GM12878 (cell line): ENCODE measurements at regions of chr2 and their contacts with region 1.

Region 1: DNA sequence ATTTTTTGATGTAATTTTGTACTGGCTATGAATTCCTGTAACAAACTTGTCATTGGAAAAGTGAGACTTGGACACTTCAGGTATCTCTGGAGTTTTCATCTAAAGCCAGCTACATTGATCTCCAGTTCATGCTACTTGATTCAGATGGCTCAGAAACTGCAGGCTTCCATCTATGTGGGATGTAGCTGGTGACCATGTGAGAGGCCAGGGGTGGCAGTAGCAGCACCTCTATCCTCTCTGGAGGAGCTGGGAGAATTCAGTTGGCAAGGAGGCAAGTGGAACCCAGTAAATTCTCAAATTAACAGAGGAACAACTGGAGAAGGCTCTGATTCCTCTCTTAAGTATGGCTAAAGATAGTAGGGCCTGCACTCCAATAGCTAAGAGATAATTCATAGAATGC is 10.0 kb upstream of the SPTBN1 start:
- DNase-seq: no peak
- ATAC-seq: no peak
- H3K4me3 ChIP-seq: no peak overlapping the region
- H3K27ac ChIP-seq: no peak overlapping the region
- H3K4me1 ChIP-seq: no peaks in the 10 kb centered on the region
- H3K27me3 ChIP-seq: no peaks in the 10 kb centered on the region
- CTCF ChIP-seq: no peak
- EP300 ChIP-seq: no peak
- POLR2A ChIP-seq: no peak
- RAD21 ChIP-seq: no peak

Region 2: DNA sequence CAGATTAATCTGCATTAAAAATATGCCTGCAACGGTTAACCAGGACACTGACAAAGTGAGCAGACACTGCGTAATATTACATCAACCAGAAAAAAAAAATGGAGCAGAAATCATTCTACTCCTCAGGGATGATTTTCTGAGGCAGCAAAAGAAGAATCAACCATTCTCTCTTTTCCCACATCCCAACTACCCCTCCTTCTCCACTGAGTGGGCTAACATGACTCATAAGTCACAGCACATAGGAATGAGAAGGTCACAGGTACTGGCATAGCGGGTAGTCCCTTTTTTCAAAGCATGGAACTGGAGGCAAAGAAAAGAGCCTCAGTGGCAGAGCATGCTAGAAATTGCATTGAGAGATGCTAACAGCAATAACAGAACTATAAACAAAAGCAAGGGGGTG is 135.8 kb before region 1 on chr2:
- CTCF ChIA-PET with region 1: no interaction called
- POLR2A ChIA-PET with region 1: no interaction called
- RAD21 ChIA-PET with region 1: no interaction called
- SMC1A ChIA-PET with region 1: no interaction called
- in situ Hi-C with region 1: no loop called
- intact Hi-C with region 1: no loop called
- DNase-seq: no peak
- ATAC-seq: no peak
- H3K4me3 ChIP-seq: no peak overlapping the region
- H3K27ac ChIP-seq: no peak overlapping the region
- H3K4me1 ChIP-seq: no peaks in the 10 kb centered on the region
- H3K27me3 ChIP-seq: no peaks in the 10 kb centered on the region
- CTCF ChIP-seq: no peak
- EP300 ChIP-seq: no peak
- POLR2A ChIP-seq: no peak
- RAD21 ChIP-seq: no peak

Region 3: GRCh38 chr2:54422072-54422581 is 24.0 kb before region 1 on chr2:
- CTCF ChIA-PET with region 1: no interaction called
- POLR2A ChIA-PET with region 1: no interaction called
- RAD21 ChIA-PET with region 1: no interaction called
- SMC1A ChIA-PET with region 1: no interaction called
- in situ Hi-C with region 1: no loop called
- intact Hi-C with region 1: no loop called
- DNase-seq: no peak
- ATAC-seq: no peak
- H3K4me3 ChIP-seq: no peak overlapping the region
- H3K27ac ChIP-seq: no peak overlapping the region
- H3K4me1 ChIP-seq: no peaks in the 10 kb centered on the region
- H3K27me3 ChIP-seq: no peaks in the 10 kb centered on the region
- CTCF ChIP-seq: no peak
- EP300 ChIP-seq: no peak
- POLR2A ChIP-seq: no peak
- RAD21 ChIP-seq: no peak

Region 4: GRCh38 chr2:54435325-54436226 is 10.5 kb before region 1 on chr2:
- CTCF ChIA-PET with region 1: interaction called, 3 read pairs
- POLR2A ChIA-PET with region 1: interaction called, 4 read pairs
- RAD21 ChIA-PET with region 1: no interaction called
- SMC1A ChIA-PET with region 1: interaction called, 13 read pairs
- in situ Hi-C with region 1: no loop called
- intact Hi-C with region 1: no loop called
- DNase-seq: no peak
- ATAC-seq: no peak
- H3K4me3 ChIP-seq: no peak overlapping the region
- H3K27ac ChIP-seq: no peak overlapping the region
- H3K4me1 ChIP-seq: no peaks in the 10 kb centered on the region
- H3K27me3 ChIP-seq: no peaks in the 10 kb centered on the region; a peak in 1 of 4 replicates
- CTCF ChIP-seq: no peak
- EP300 ChIP-seq: no peak
- POLR2A ChIP-seq: no peak
- RAD21 ChIP-seq: no peak